ENCODE measurements at regions of chr1 and their contacts with region 1.

Region 1: GRCh38 chr1:201023517-201023902 is at the start of gene KIF21B:
- DNase-seq: peak; percentile 79 to 95 (median 90)
- ATAC-seq: peak; percentile 78
- H3K4me3 ChIP-seq: peak within 1 kb of the TSS; percentile 67
- H3K4me3 Mint-ChIP-seq: peak within 1 kb of the TSS; percentile 94
- H3K27ac ChIP-seq: peak within 1 kb of the TSS; percentile 80 to 90
- H3K27ac Mint-ChIP-seq: peak within 1 kb of the TSS; percentile 90
- H3K4me1 ChIP-seq: peaks cover 72% of the 10 kb centered on the region
- H3K4me1 Mint-ChIP-seq: peaks cover 77% of the 10 kb centered on the region
- H3K27me3 ChIP-seq: no peaks in the 10 kb centered on the region
- H3K27me3 Mint-ChIP-seq: no peaks in the 10 kb centered on the region
- CTCF ChIP-seq: no peak
- total RNA-seq, gene KIF21B: 64.5 to 65.4 TPM

Region 2: DNA sequence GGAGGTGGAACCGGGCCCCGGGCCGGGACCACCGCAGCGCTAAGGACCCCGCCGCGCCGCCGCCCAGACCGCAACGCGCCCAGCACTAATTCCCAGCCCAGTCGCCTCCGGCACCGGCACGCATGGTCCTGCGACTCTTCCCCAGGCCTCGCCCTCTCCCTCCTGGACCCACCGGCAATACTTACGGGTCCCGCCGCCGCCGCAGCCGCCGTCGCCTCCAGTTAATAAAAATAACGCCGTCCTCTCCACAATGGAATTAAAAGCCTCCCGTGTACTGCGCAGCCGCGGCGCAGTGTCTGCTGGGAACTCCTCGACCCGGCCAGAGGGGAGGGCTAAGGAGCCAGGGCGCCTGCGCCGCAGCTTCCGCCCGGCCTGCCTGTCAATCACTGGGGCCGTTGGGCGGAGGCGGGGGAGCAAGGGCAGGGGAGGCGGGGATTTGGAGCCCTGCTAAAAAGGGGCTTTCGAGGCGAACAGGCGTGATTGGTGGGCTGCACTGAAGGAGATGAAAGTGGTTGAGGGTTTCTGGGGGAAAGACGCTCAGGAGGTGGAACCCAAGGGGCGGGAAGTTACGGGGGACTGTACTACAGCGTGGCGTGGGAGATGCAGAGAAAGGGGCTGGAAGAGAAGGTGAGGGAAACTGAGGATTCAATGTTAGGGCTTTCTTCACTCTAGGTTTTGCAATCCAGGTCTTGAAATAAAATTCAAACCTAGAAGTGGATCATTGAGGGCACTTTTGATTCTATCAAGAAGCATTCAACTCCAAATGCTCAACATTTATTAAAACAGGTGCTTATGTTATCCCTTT is 613.5 kb before region 1 on chr1 and contains the start of gene ZNF281:
- CTCF ChIA-PET with region 1: no interaction called
- POLR2A ChIA-PET with region 1: no interaction called
- intact Hi-C with region 1: loop called in 1 of 2 experiments (anchors 10 kb)
- DNase-seq: peak; percentile 86 to 97 (median 92)
- ATAC-seq: peak; percentile 96
- H3K4me3 ChIP-seq: peak within 1 kb of the TSS; percentile 93
- H3K4me3 Mint-ChIP-seq: peak within 1 kb of the TSS; percentile 98
- H3K27ac ChIP-seq: peak within 1 kb of the TSS; percentile 68 to 81
- H3K27ac Mint-ChIP-seq: peak within 1 kb of the TSS; percentile 87
- H3K4me1 ChIP-seq: peaks cover 25% of the 10 kb centered on the region
- H3K4me1 Mint-ChIP-seq: peaks cover 56% of the 10 kb centered on the region
- H3K27me3 ChIP-seq: no peaks in the 10 kb centered on the region
- H3K27me3 Mint-ChIP-seq: no peaks in the 10 kb centered on the region
- CTCF ChIP-seq: no peak
- total RNA-seq, gene ZNF281: 27.6 to 29.3 TPM

Region 3: GRCh38 chr1:200669314-200670241 is 353.9 kb before region 1 on chr1 and contains the start of gene DDX59:
- CTCF ChIA-PET with region 1: no interaction called
- POLR2A ChIA-PET with region 1: interaction called, 11 read pairs
- intact Hi-C with region 1: loop called in 1 of 2 experiments (anchors 5 kb)
- DNase-seq: peak; percentile 75 to 95 (median 86)
- ATAC-seq: peak; percentile 91
- H3K4me3 ChIP-seq: peak within 1 kb of the TSS; percentile 82
- H3K4me3 Mint-ChIP-seq: peak within 1 kb of the TSS; percentile 93
- H3K27ac ChIP-seq: peak within 1 kb of the TSS; percentile 75 to 91
- H3K27ac Mint-ChIP-seq: peak within 1 kb of the TSS; percentile 78
- H3K4me1 ChIP-seq: peaks cover 18% of the 10 kb centered on the region
- H3K4me1 Mint-ChIP-seq: peaks cover 55% of the 10 kb centered on the region
- H3K27me3 ChIP-seq: no peaks in the 10 kb centered on the region
- H3K27me3 Mint-ChIP-seq: no peaks in the 10 kb centered on the region
- CTCF ChIP-seq: no peak
- total RNA-seq, gene DDX59: 24.7 to 27.6 TPM

Region 4: GRCh38 chr1:200979574-200980451 is 43.7 kb before region 1 on chr1:
- CTCF ChIA-PET with region 1: interaction called, 11 read pairs
- POLR2A ChIA-PET with region 1: interaction called, 5 read pairs
- intact Hi-C with region 1: no loop called
- DNase-seq: peak; percentile 40 to 79 (median 57)
- ATAC-seq: peak; percentile 54
- H3K4me3 ChIP-seq: no peak overlapping the region
- H3K4me3 Mint-ChIP-seq: no peak overlapping the region
- H3K27ac ChIP-seq: no peak overlapping the region
- H3K27ac Mint-ChIP-seq: no peak overlapping the region
- H3K4me1 ChIP-seq: peaks cover 4% of the 10 kb centered on the region
- H3K4me1 Mint-ChIP-seq: no peaks in the 10 kb centered on the region
- H3K27me3 ChIP-seq: no peaks in the 10 kb centered on the region
- H3K27me3 Mint-ChIP-seq: no peaks in the 10 kb centered on the region
- CTCF ChIP-seq: peak; percentile 78

Region 5: DNA sequence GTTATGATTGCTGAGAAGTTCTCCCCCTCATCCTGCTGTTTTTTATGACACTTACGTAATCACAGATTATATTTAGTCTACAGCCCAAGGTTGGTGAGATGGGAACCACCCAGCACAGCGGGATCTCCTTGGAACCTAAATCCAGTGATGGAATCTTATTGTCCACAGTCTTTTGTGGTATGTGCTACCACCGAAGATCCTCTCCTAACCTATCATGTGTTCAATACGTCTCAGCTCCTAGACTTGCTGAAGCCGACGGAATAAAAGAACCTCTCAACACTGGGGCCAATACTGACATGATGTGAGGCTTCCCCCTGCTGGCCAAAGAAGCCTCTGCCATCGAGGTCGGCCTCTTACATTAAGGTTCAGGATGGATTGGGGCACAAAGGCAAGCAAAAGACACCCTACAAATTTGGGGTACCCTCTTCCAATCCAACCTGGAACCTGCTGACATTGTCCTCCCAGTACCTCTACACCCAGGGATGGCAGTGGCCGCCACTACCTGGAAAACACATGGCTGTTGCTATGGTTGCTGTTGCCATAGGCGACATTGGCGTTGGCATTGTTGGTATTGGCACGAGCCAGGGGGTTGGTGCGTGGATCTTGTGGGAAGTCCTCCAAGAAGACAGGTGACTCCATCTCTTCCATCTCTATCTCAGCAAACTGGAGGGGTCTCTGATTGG is 19.4 kb after region 1 on chr1:
- CTCF ChIA-PET with region 1: interaction called, 13 read pairs
- POLR2A ChIA-PET with region 1: interaction called, 4 read pairs
- intact Hi-C with region 1: loop called (anchors 1 to 2 kb)
- DNase-seq: peak; percentile 60 to 86 (median 66)
- ATAC-seq: peak; percentile 99
- H3K4me3 ChIP-seq: no peak overlapping the region
- H3K4me3 Mint-ChIP-seq: no peak overlapping the region
- H3K27ac ChIP-seq: no peak overlapping the region
- H3K27ac Mint-ChIP-seq: no peak overlapping the region
- H3K4me1 ChIP-seq: peaks cover 7% of the 10 kb centered on the region
- H3K4me1 Mint-ChIP-seq: peaks cover 6% of the 10 kb centered on the region
- H3K27me3 ChIP-seq: no peaks in the 10 kb centered on the region
- H3K27me3 Mint-ChIP-seq: no peaks in the 10 kb centered on the region
- CTCF ChIP-seq: peak; percentile 90

Region 6: DNA sequence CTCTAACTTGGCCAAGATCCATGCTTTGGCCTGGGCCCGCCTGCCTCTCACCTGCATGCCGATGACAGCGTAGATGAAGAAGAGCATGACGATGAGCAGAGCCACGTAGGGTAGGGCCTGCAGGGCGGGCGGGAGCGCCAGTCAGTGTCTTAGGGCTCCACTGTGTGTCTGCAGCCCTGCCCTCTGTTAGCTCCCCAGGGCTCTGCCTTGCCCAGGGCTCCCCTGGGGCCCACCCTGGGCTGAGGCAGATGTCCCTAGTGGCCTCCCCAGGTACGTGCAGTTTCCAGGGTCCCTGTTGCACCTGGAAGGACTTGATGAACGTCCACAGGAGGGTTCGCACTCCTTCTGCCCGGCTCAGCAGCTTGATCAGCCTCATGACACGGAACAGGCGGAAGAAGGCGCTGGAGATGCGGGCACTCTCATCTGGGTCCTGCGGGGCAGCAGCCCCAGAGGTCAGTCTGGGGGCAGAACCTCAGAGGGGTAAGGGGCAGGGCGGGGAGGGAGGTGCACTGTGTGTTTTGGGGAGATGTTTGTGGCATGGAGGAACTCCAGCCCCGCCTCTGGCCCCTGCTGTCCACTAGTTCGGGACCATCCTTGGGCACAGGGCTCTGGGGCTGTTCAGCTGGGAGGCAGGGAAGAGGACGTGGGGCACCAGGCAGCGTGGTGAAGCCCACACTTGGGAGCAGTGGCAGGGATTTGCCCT is 29.8 kb after region 1 on chr1:
- CTCF ChIA-PET with region 1: no interaction called
- POLR2A ChIA-PET with region 1: no interaction called
- intact Hi-C with region 1: no loop called
- DNase-seq: no peak
- ATAC-seq: no peak
- H3K4me3 ChIP-seq: no peak overlapping the region
- H3K4me3 Mint-ChIP-seq: no peak overlapping the region
- H3K27ac ChIP-seq: no peak overlapping the region
- H3K27ac Mint-ChIP-seq: no peak overlapping the region
- H3K4me1 ChIP-seq: peaks cover 3% of the 10 kb centered on the region
- H3K4me1 Mint-ChIP-seq: peaks cover 6% of the 10 kb centered on the region
- H3K27me3 ChIP-seq: no peaks in the 10 kb centered on the region
- H3K27me3 Mint-ChIP-seq: no peaks in the 10 kb centered on the region
- CTCF ChIP-seq: no peak

Measured in CD4-positive, alpha-beta T cell (primary cell).